ENCODE measurements at regions of chr5 and their contacts with region 1.

Region 1: GRCh38 chr5:43120720-43121564 is at the start of gene ZNF131:
- DNase-seq: peak; percentile 96
- H3K4me3 Mint-ChIP-seq: peak within 1 kb of the TSS; percentile 97
- H3K27ac Mint-ChIP-seq: peak within 1 kb of the TSS; percentile 99
- H3K4me1 Mint-ChIP-seq: peaks cover 31% of the 10 kb centered on the region
- H3K27me3 Mint-ChIP-seq: no peaks in the 10 kb centered on the region
- total RNA-seq, gene ZNF131: 37.4 and 40.3 TPM in 2 replicates

Region 2: DNA sequence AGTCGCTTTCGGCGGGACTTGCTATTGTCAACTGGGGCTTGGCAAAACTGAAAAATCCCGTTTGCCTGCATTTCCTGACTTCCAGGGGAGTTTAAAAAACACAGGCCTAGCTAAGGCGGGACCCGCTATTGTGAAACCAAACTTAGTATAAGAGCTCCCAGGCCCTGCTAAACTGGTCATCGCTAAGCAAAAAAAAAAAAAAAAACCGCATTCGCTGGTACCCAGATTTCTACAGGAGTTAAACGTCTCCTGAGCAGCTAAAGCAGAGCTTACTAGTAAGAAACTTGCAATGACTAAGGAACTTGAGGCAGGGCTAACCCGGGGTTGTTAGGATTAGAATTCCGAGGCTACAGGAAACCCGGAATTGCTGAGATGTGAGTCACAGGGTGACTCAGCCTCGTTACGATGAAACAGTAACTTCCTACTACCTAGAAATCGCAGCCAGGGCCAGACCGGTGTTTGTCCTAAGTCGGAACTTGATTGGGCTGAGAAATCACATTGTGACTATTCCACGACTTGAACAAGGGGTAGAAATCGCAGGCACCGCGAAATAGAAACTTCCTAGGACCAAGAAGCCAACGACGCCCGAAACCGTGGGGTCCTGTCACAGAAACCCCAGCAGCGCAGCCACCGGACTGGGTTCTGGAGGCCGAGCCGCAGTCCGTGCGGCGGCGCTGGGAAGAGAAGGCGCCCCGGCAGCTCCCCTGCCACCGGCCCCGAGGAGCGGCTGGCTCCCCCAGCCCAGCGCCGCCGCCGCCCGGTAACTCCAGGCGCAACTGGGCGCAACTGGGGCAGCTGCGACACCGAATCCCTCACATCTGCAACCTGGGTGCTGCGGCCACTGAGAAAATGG is 170.3 kb before region 1 on chr5:
- intact Hi-C with region 1: loop called (anchors 5 kb)
- DNase-seq: peak; percentile 61
- H3K4me3 Mint-ChIP-seq: peak overlapping the region; percentile 92
- H3K27ac Mint-ChIP-seq: peak overlapping the region; percentile 99
- H3K4me1 Mint-ChIP-seq: peaks cover 24% of the 10 kb centered on the region
- H3K27me3 Mint-ChIP-seq: peaks cover 2% of the 10 kb centered on the region

Region 3: DNA sequence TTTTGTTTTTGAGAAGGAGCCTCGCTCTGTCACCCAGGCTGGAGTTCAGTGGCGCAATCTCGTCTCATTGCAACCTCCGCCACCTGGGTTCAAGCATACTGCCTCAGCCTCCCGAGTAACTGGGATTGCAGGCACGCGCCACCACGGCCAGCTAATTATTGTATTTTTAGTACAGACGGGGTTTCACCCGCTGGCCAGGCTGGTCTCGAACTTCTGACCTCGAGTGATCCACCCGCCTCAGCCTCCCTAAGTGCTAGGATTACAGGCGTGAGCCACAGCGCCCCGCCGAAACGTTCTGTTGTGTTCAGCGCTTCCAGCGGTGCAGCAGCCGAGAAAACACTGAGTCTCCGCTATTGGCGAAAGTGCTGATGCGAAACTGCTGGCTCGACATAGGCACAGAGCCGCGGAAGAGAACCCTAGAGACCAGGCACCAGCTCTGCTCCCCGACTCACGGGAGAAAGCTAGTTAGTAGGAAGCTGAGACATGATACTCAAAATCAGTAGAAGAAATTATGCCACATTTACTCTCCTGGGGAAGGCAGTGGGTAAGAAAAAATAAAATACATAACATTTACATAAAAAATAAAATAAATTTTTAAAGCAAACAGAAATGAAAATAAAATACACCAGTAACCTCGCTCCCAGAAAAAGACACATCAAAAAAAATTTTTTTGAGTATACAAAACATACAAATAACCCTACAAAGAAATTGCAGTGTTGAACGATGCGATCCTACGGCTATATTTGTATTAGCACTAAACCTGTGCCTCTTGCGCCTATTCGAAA is 112.4 kb before region 1 on chr5:
- intact Hi-C with region 1: loop called (anchors 5 kb)
- DNase-seq: peak; percentile 88
- H3K4me3 Mint-ChIP-seq: peak overlapping the region; percentile 85
- H3K27ac Mint-ChIP-seq: peak overlapping the region; percentile 95
- H3K4me1 Mint-ChIP-seq: peaks cover 24% of the 10 kb centered on the region
- H3K27me3 Mint-ChIP-seq: no peaks in the 10 kb centered on the region

Region 4: DNA sequence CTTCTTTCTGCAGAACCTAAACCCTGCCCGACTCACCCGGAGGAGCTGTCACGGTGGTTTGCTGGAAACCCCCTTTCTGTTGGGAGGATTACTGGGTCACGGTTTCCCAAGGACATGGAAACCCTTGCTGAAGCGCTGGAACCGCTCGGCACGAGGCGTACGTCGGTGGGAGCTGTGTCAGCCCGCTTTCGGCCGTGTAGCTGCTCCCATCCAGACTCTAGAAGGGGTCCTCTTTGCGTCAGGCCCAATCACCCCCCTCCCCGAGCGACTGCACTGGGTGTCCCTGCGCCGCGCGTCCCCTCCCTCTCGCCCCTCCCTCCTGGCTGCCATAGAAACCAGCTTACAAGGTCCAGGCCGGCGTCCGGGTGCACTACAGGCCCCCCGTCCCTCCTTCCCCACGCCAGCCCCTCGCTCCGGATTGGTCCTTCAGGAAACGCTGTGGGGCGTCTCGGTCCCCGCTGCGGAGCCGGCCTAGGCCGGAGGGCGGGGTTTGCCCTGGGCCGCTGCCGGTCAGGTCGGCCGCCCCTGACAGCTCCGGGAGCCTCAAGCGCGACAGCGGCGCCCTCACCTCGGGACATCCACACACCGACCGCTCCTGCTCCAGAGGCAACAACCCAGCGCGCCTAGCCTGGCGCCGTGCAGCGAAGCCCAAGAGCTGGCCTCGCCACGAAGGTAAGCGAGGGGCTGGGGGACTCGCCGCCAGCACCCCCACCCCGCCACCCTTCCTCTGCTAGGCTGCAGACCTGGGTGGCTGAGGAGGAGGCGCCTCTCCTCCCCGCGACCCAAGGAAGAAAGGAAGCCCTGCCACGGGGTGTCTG is 71.0 kb after region 1 on chr5 and contains the start of gene NIM1K:
- intact Hi-C with region 1: loop called (anchors 1 kb)
- DNase-seq: peak; percentile 35
- H3K4me3 Mint-ChIP-seq: peak within 1 kb of the TSS; percentile 82
- H3K27ac Mint-ChIP-seq: peak within 1 kb of the TSS; percentile 59
- H3K4me1 Mint-ChIP-seq: peaks cover 24% of the 10 kb centered on the region
- H3K27me3 Mint-ChIP-seq: peaks cover 10% of the 10 kb centered on the region
- total RNA-seq, gene NIM1K: 0.76 and 1.1 TPM in 2 replicates

Region 5: DNA sequence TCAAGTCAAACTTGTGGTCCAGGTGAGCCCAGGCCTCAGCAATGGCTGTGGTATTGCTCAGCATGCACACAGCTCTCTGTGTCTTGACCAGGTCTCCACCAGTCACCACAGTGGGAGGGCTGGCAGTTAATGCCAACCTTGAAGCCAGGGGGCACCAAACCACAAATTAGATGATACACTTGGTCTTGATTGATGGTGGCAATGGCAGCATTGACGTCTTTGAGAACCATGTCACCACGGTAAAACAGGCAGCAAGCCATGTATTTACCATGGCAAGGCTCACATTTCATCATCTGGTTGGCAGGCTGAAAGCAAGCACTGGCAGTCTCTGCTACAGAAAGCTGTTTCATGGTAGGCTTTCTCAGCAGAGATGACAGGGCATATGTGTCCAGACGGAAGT is 111.0 kb after region 1 on chr5:
- intact Hi-C with region 1: no loop called
- DNase-seq: no peak
- H3K4me3 Mint-ChIP-seq: no peak overlapping the region
- H3K27ac Mint-ChIP-seq: no peak overlapping the region
- H3K4me1 Mint-ChIP-seq: peaks cover 27% of the 10 kb centered on the region
- H3K27me3 Mint-ChIP-seq: no peaks in the 10 kb centered on the region

Region 6: GRCh38 chr5:43313035-43313853 is 192.3 kb after region 1 on chr5 and contains the start of gene HMGCS1:
- intact Hi-C with region 1: loop called (anchors 2 kb)
- DNase-seq: peak; percentile 99
- H3K4me3 Mint-ChIP-seq: peak within 1 kb of the TSS; percentile 98
- H3K27ac Mint-ChIP-seq: peak within 1 kb of the TSS; percentile 95
- H3K4me1 Mint-ChIP-seq: peaks cover 67% of the 10 kb centered on the region
- H3K27me3 Mint-ChIP-seq: no peaks in the 10 kb centered on the region
- total RNA-seq, gene HMGCS1: 232 and 233 TPM in 2 replicates

Region 7: DNA sequence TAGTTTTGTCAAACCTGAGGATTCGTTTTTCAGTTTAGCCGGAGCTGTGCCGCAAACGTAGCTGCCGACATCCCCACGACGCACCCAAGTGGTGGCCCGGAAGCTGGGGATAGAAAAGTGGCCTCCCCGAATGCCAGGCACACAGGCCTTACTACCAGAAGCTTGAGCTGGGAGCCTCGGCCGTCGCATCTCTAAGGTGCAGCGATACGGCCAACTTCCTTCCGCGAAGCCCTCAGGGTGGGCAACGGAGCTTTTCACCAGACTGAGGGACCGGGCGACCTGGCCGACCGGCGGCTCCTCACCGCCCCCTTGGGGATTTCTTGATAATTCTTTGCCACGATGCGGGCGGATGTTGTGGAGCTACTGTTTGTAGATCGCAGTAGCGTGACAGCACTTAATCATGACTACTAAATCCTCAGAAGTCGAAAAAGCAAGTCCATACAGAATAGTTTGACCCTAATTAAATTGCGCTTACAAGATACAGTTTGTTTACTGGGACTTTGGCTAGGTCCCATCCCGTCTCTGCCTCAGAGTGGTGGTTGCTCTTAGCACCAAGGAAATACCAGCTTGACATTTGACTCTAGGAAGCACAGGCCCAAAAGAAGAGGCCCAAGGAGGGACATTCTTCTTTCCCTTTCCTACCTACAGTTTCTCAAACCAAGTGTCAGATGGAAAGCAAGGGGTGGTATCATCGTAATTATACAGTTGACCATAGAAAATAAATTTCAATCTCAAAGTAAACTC is 363.3 kb after region 1 on chr5:
- intact Hi-C with region 1: loop called (anchors 1 kb)
- DNase-seq: peak; percentile 87
- H3K4me3 Mint-ChIP-seq: peak overlapping the region; percentile 93
- H3K27ac Mint-ChIP-seq: peak overlapping the region; percentile 99
- H3K4me1 Mint-ChIP-seq: peaks cover 41% of the 10 kb centered on the region
- H3K27me3 Mint-ChIP-seq: no peaks in the 10 kb centered on the region

Region 8: DNA sequence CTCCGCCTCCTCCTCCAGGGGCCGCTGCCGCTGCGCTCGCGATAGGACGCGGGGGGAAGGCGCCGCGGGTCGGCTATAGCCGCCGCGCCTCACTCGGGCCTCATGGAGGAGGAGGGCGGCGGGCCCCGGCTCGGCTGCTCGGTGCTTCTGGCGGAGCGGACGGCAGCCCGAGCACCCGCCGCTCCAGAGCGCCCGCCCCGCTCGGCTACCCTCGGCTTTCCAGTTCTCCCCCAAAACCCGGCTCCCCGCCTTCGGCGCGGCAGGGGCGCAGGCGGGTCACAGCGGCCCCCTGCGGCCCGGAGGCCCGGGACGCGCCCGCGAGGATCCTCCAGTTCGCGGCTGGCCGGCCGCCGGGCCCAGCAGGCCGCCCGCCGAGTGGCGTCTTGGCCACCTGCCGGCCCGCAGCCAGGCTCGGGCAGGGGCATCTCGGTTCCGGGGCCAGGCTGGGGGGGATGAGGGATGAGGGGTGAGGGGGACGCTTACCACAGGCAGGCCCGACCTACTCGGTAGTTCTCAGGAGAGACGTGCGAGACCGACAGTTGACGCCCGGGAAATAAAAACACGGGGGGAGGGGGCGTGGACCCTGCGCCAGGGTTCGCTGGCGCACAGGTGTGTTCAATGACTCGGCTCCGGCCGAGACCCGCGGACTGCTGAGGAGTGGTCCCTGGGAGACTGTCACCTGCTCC is 436.1 kb after region 1 on chr5 and contains the start of gene PAIP1:
- intact Hi-C with region 1: loop called (anchors 5 kb)
- DNase-seq: peak; percentile 84
- H3K4me3 Mint-ChIP-seq: peak within 1 kb of the TSS; percentile 86
- H3K27ac Mint-ChIP-seq: peak within 1 kb of the TSS; percentile 90
- H3K4me1 Mint-ChIP-seq: peaks cover 8% of the 10 kb centered on the region
- H3K27me3 Mint-ChIP-seq: peaks cover 9% of the 10 kb centered on the region
- total RNA-seq, gene PAIP1: 56.8 and 58.0 TPM in 2 replicates

Measured in activated T-helper 2 cell treated with anti-CD3 and anti-CD28 coated beads, Interferon-gamma antibody, Interleukin-2, Interleukin-4, amounts not matched to agents 10 μg/mL and 5 μg/mL and 100 μg/mL, durations not matched to agents 14 hours and 24 hours and 36 hours (primary cell).